BJ (cell line): ENCODE measurements at regions of chr1 and their contacts with region 1.

Region 1: GRCh38 chr1:226778657-226779058 is 39.6 kb upstream of the ITPKB start:
- DNase-seq: peak; percentile 94
- H3K4me3 ChIP-seq: no peak overlapping the region
- H3K27me3 ChIP-seq: peaks cover 3% of the 10 kb centered on the region; the same call in 1 of the 2 replicates
- CTCF ChIP-seq: no peak

Region 2: GRCh38 chr1:226788965-226789364 is 10.3 kb after region 1 on chr1:
- CTCF ChIA-PET with region 1: no interaction called
- POLR2A ChIA-PET with region 1: no interaction called
- DNase-seq: no peak
- H3K4me3 ChIP-seq: no peak overlapping the region
- H3K27me3 ChIP-seq: peaks cover 7% of the 10 kb centered on the region
- CTCF ChIP-seq: no peak

Region 3: GRCh38 chr1:227396539-227397353 is 618.1 kb after region 1 on chr1:
- CTCF ChIA-PET with region 1: no interaction called
- POLR2A ChIA-PET with region 1: interaction called, 28 read pairs
- DNase-seq: no peak
- H3K4me3 ChIP-seq: no peak overlapping the region
- H3K27me3 ChIP-seq: no peaks in the 10 kb centered on the region
- CTCF ChIP-seq: no peak